ENCODE measurements at regions of chr12 and their contacts with region 1.

Region 1: GRCh38 chr12:41277116-41277945 is 89.2 kb downstream of the PDZRN4 start:
- DNase-seq: peak; percentile 55 to 78 (median 78)
- H3K4me3 ChIP-seq: peak overlapping the region in 2 of 7 experiments; percentile 0 to 12
- H3K27ac ChIP-seq: no peak overlapping the region
- H3K4me1 ChIP-seq: peaks cover 0 to 4% (median 1%) of the 10 kb centered on the region in 4 experiments
- H3K27me3 ChIP-seq: no peaks in the 10 kb centered on the region

Region 2: GRCh38 chr12:41228066-41228820 is 49.1 kb before region 1 on chr12:
- CTCF ChIA-PET with region 1: no interaction called
- POLR2A ChIA-PET with region 1: no interaction called
- DNase-seq: peak; percentile 12 to 60 (median 19)
- H3K4me3 ChIP-seq: peak overlapping the region in 2 of 7 experiments; percentile 6 to 17
- H3K27ac ChIP-seq: no peak overlapping the region
- H3K4me1 ChIP-seq: peaks cover 0 to 17% (median 4%) of the 10 kb centered on the region in 4 experiments
- H3K27me3 ChIP-seq: no peaks in the 10 kb centered on the region

Region 3: DNA sequence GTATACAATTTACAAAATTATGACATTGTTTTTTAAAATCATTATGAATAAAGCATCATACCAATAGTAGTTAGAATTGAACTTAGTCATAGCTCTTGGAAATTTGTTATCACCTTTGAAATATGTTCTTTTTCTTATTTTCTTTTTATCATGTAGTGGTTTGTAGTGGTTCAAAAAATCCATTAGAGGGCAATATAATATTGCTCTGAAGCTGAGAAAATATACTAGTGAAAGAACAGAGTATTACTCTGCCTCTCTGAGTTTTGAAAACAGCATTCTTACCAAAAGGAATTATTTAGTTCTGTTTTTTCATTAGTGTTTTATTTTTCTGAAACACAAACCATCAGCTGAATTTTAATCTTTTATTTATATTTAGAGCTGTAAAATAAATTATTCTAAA is 13.1 kb before region 1 on chr12:
- CTCF ChIA-PET with region 1: interaction called, 11 read pairs
- POLR2A ChIA-PET with region 1: no interaction called
- DNase-seq: peak; percentile 10 to 56 (median 47)
- H3K4me3 ChIP-seq: no peak overlapping the region
- H3K27ac ChIP-seq: no peak overlapping the region
- H3K4me1 ChIP-seq: no peaks in the 10 kb centered on the region
- H3K27me3 ChIP-seq: no peaks in the 10 kb centered on the region

Region 4: DNA sequence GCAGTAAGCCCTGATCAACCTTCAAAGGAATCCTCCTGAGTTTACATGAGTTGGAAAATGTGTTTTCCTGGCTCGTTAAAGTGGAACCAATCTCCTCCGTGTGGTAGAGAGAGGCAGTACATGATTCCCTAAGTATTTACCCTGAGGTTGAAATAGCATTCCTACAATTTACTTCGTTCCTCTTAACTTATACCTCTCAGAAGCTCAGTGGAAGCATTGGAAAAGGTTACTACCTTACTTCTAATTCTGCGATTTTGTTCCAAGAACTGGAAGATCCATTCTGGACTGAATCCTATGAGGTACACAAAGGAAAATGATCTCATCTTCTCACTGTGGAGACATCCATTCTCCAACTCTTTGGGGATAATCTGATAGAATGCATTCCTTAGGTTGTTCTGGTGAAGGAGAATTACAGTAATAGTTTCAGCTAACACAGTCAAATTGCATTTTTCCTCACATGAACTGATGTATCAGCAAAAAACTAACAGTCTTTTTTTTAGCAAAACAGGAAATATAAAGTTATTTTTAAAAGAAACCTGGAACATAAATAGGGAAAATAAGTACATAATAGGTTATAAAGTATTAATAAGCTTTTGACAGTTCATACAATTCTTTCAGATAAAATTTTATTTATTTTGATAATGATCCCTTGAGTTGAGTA is 386.4 kb after region 1 on chr12:
- CTCF ChIA-PET with region 1: interaction called, 12 read pairs
- POLR2A ChIA-PET with region 1: no interaction called
- DNase-seq: peak; percentile 14 to 32 (median 29)
- H3K4me3 ChIP-seq: no peak overlapping the region
- H3K27ac ChIP-seq: no peak overlapping the region
- H3K4me1 ChIP-seq: no peaks in the 10 kb centered on the region
- H3K27me3 ChIP-seq: no peaks in the 10 kb centered on the region

Region 5: DNA sequence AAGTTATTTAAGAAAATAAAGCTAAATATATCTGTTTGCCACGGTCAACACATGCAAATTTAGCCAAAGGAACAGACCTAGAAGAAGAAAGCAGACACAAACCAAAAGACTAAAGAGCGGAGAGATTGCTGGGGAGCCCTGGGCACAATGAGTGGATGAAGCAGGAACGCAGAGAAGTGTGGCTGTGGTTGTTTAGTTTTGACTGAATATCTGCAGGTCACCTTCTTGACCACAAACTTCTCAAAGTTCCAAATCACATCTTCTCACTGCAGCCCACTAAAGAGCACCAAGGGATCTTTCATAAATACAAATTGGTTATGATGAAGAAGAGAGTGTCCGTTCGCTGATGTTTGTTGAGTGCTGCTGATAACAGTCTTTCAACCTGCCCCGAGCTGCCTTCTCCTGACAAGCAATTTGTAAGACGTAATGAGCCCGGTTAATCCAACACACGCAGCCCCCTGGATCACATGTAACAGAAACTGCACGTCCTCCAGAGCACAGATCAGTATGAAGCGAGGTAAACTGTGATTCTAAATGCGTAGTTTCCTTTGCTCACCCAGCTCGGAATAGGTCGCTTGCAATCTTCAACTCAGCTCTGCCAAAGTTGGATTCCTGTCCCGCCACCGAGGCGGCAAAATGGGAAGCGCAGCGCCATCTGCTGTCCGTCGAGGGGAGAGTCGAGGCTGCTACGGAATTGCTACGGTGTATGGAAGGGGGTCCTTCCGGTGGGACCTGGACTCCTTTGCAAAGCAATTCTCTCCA is 746.6 kb after region 1 on chr12:
- CTCF ChIA-PET with region 1: interaction called, 72 read pairs
- POLR2A ChIA-PET with region 1: interaction called, 4 read pairs
- DNase-seq: peak; percentile 74 to 86 (median 85)
- H3K4me3 ChIP-seq: peak overlapping the region; percentile 13 to 82 (median 61)
- H3K27ac ChIP-seq: no peak overlapping the region
- H3K4me1 ChIP-seq: peaks cover 10 to 28% (median 22%) of the 10 kb centered on the region in 4 experiments
- H3K27me3 ChIP-seq: no peaks in the 10 kb centered on the region

Region 6: GRCh38 chr12:42104087-42104486 is 826.8 kb after region 1 on chr12:
- CTCF ChIA-PET with region 1: interaction called, 10 read pairs
- POLR2A ChIA-PET with region 1: no interaction called
- DNase-seq: peak in 2 of 3 donors; percentile 20 to 26
- H3K4me3 ChIP-seq: no peak overlapping the region
- H3K27ac ChIP-seq: no peak overlapping the region
- H3K4me1 ChIP-seq: no peaks in the 10 kb centered on the region
- H3K27me3 ChIP-seq: no peaks in the 10 kb centered on the region

Measured in common myeloid progenitor, CD34-positive (primary cell).